ENCODE measurements at regions of chr22 and their contacts with region 1.

Region 1: DNA sequence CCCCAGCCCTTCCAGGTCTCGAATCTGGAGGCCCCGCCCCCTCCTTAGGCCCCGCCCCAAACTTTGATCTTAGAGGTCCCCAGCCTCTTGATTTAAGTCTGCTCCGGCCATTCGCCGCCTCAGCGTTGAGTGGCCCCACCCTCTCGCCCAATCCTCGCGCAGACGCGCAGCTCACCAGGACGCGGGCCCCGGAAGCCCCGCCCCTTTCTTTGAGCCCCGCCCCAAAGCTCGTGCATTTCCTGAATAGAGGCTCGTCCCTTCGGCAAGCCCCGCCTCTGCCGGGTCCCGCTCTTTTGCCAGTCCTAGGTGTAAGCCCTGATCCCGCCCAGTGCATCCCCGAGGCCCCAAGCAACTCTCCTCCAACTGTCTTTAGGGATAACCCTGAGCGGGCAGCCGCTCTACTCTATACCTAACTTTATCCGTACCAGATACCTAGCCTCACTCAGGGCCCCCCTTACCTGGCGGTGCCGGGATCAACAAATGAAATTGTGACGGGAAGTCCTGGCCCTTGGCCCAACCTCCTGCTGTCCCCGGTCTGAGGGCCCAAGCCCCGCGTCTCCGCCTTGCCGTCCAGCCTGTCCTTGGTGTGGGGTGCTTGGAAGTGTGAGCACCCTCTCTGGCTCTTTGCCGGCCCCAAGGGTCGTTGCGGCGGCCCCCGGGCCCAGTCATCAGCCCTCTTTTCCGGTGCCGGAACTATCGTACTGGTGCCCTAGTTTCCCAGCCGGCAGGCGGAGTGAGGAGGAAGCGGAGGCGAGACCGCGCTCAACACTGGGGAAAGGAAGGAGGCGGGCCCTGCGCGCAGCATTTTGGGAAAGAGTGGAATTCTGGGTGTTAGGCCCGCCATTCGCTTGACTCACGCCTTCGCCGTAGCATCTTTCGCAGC is at the start of gene SNRPD3:
- DNase-seq: peak; percentile 98
- ATAC-seq: peak; percentile 90
- H3K4me3 ChIP-seq: peak within 1 kb of the TSS; percentile 85
- H3K27ac ChIP-seq: peak within 1 kb of the TSS; percentile 93
- H3K4me1 ChIP-seq: peaks cover 7% of the 10 kb centered on the region
- H3K27me3 ChIP-seq: no peaks in the 10 kb centered on the region
- CTCF ChIP-seq: no peak
- POLR2A ChIP-seq: peak; percentile 73
- RAD21 ChIP-seq: peak; percentile 11; the same call in 1 of the 2 replicates
- total RNA-seq, gene SNRPD3: 158 and 177 TPM in 2 replicates

Region 2: GRCh38 chr22:24037851-24038765 is 517.3 kb before region 1 on chr22:
- CTCF ChIA-PET with region 1: no interaction called
- POLR2A ChIA-PET with region 1: interaction called, 14 read pairs
- dilution Hi-C with region 1: no loop called
- in situ Hi-C with region 1: no loop called
- intact Hi-C with region 1: no loop called
- DNase-seq: no peak
- ATAC-seq: no peak
- H3K4me3 ChIP-seq: no peak overlapping the region
- H3K27ac ChIP-seq: no peak overlapping the region
- H3K4me1 ChIP-seq: peaks cover 4% of the 10 kb centered on the region
- H3K27me3 ChIP-seq: no peaks in the 10 kb centered on the region
- CTCF ChIP-seq: no peak
- POLR2A ChIP-seq: no peak
- RAD21 ChIP-seq: no peak

Region 3: DNA sequence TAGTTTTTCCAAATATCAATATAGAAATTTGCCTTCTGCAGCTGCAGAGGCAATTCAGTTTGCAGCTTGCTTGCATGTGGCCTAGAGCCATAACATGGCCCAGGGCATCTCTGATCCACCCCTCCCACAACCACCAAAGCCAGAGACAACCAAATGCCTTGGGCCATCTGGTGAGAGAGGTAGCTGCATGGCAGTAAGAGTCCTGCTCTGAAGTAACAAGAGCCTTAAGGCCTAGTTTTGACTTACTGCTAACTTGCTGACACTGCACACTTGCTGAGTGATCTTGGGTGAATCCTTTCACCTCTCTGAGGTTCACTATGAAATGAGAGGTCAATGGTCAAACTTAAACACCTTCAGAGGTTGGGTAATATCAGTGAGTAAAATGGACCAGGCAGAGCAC is 289.7 kb before region 1 on chr22:
- CTCF ChIA-PET with region 1: no interaction called
- POLR2A ChIA-PET with region 1: no interaction called
- dilution Hi-C with region 1: no loop called
- in situ Hi-C with region 1: no loop called
- intact Hi-C with region 1: no loop called
- DNase-seq: peak; percentile 5
- ATAC-seq: no peak
- H3K4me3 ChIP-seq: no peak overlapping the region
- H3K27ac ChIP-seq: no peak overlapping the region
- H3K4me1 ChIP-seq: peaks cover 6% of the 10 kb centered on the region
- H3K27me3 ChIP-seq: no peaks in the 10 kb centered on the region
- CTCF ChIP-seq: no peak
- POLR2A ChIP-seq: no peak
- RAD21 ChIP-seq: no peak

Region 4: DNA sequence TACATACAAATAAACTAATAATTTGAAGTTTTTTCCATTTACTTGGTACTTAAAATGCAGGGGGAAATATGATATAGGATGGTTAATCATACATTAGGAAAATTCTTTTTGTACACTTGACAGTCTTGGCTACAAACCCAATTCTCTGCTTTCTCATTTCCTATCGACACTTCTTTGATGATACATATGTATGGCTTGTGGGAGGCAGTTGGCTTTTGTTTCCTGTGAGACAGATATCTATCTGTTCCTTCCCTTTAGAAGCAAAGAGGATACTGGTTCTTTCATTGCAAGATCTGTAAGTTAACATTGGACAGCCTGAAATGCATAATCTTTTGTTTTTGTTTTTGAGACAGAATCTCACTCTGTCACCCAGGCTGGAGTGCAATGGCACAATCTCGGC is 175.9 kb before region 1 on chr22:
- CTCF ChIA-PET with region 1: no interaction called
- POLR2A ChIA-PET with region 1: no interaction called
- dilution Hi-C with region 1: no loop called
- in situ Hi-C with region 1: no loop called
- intact Hi-C with region 1: no loop called
- DNase-seq: peak; percentile 56
- ATAC-seq: no peak
- H3K4me3 ChIP-seq: no peak overlapping the region
- H3K27ac ChIP-seq: no peak overlapping the region
- H3K4me1 ChIP-seq: no peaks in the 10 kb centered on the region
- H3K27me3 ChIP-seq: no peaks in the 10 kb centered on the region
- CTCF ChIP-seq: no peak
- POLR2A ChIP-seq: no peak
- RAD21 ChIP-seq: no peak

Region 5: GRCh38 chr22:25007444-25008106 is 452.2 kb after region 1 on chr22:
- CTCF ChIA-PET with region 1: no interaction called
- POLR2A ChIA-PET with region 1: no interaction called
- dilution Hi-C with region 1: no loop called
- in situ Hi-C with region 1: no loop called
- intact Hi-C with region 1: no loop called
- DNase-seq: no peak
- ATAC-seq: no peak
- H3K4me3 ChIP-seq: no peak overlapping the region
- H3K27ac ChIP-seq: no peak overlapping the region
- H3K4me1 ChIP-seq: no peaks in the 10 kb centered on the region
- H3K27me3 ChIP-seq: no peaks in the 10 kb centered on the region
- CTCF ChIP-seq: no peak
- POLR2A ChIP-seq: no peak
- RAD21 ChIP-seq: no peak

Measured in IMR-90 (cell line).